ENCODE measurements at regions of chr4 and their contacts with region 1.

Region 1: DNA sequence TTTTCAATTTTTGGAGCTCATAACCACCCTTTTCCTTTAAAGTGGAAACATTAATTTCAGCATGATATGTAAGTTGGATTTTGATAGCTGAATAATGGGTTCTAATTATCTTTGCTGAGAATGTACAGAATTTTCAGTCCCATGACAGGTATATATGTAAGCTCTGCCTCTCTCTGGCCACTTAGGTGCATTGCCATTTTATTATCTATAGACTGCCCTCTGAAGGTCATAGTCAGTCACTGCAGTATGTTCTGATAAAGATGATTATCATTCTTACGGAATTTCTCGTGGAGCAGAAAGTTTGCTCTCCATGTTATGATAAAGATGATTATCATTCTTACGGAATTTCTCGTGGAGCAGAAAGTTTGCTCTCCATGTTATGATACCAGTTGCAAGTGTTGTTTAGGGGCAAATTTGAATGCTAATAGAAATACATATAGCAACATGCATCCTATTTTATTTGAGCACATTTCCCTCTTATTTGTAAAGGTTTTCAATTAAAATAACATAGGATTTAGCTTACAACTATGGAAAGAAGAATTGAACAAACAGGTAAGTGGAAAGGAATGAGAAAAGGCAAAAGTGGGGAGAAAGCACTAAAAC is 10.4 kb downstream of the AFP start:
- DNase-seq: peak; percentile 48
- CTCF ChIP-seq: peak; percentile 78

Region 2: GRCh38 chr4:73311428-73311827 is 135.0 kb before region 1 on chr4:
- CTCF ChIA-PET with region 1: interaction called, 26 read pairs
- POLR2A ChIA-PET with region 1: no interaction called
- DNase-seq: no peak
- CTCF ChIP-seq: no peak

Region 3: DNA sequence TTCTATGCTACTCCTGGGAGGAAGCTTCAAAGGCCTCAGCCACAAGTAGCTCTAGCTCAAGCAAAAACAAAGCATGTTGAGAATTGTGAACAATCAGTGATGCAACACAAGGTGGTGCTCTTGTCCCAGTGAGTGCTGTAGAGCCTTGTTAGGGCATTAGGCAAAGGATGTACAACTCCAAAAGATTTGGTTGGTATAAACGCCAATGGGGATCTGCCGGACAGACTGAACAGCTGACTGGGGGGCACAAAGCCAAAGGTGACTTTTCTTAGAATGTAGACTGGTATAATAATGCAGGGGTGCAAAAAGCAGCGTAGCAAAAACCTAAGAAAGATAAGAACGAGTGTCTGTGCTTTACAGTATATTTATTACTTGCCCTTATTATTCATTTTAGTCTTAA is 105.0 kb before region 1 on chr4:
- CTCF ChIA-PET with region 1: interaction called, 55 read pairs
- POLR2A ChIA-PET with region 1: no interaction called
- DNase-seq: peak; percentile 38
- CTCF ChIP-seq: peak; percentile 55

Region 4: GRCh38 chr4:73434311-73434710 is 12.1 kb before region 1 on chr4:
- CTCF ChIA-PET with region 1: interaction called, 34 read pairs
- POLR2A ChIA-PET with region 1: no interaction called
- DNase-seq: peak; percentile 8
- CTCF ChIP-seq: peak; percentile 34

Region 5: GRCh38 chr4:73468170-73468569 is 21.7 kb after region 1 on chr4:
- CTCF ChIA-PET with region 1: interaction called, 10 read pairs
- POLR2A ChIA-PET with region 1: no interaction called
- DNase-seq: no peak
- CTCF ChIP-seq: no peak

Measured in GM10248 (cell line).